Ovary (tissue), 10 donors: ENCODE measurements at regions of chr1 and their contacts with region 1.

Region 1: GRCh38 chr1:204929487-204930154 is 59.0 kb downstream of the NFASC start:
- DNase-seq: no peak
- H3K4me3 ChIP-seq: no peak overlapping the region
- H3K27ac ChIP-seq: no peak overlapping the region
- H3K4me1 ChIP-seq: peaks cover 9% of the 10 kb centered on the region
- H3K27me3 ChIP-seq: no peaks in the 10 kb centered on the region
- CTCF ChIP-seq: no peak
- EP300 ChIP-seq: no peak
- POLR2A ChIP-seq: no peak

Region 2: DNA sequence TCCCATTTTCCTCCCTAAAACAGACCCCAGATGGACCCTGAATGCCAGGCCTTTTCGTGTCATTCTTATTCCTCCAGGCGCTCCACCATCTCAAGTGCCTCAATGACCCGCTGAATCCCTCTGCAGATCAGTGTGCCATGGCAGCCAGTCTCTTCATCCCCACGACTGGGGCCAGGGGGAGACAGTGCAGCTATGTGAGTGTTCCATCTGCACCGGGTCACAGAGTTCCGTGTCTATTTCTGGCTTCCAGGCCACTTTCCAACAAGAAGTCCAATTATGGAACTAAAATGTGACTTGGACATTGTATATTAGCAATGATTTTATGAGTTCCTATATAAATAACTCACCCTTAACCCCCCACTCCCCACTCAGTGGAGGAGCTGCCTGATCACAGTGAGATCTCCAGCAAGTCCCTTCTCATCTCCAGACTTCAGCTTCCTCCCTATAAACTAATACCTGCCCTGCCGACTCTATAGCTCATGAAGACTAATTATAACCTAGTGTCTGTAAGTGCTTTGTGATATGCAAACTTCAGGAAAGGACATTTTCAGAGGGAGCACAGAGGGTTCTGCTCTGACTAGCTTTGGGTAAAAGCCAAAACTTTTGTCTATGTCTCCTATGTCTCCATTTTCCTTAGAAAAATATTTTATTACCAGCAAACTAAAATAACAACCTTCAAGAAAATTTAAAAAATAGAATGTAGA is 115.3 kb before region 1 on chr1:
- intact Hi-C with region 1: loop called in 1 of 4 experiments (anchors 5 kb)
- DNase-seq: no peak
- H3K4me3 ChIP-seq: no peak overlapping the region
- H3K27ac ChIP-seq: no peak overlapping the region
- H3K4me1 ChIP-seq: peaks cover 4% of the 10 kb centered on the region
- H3K27me3 ChIP-seq: no peaks in the 10 kb centered on the region
- CTCF ChIP-seq: no peak
- EP300 ChIP-seq: no peak
- POLR2A ChIP-seq: no peak

Region 3: DNA sequence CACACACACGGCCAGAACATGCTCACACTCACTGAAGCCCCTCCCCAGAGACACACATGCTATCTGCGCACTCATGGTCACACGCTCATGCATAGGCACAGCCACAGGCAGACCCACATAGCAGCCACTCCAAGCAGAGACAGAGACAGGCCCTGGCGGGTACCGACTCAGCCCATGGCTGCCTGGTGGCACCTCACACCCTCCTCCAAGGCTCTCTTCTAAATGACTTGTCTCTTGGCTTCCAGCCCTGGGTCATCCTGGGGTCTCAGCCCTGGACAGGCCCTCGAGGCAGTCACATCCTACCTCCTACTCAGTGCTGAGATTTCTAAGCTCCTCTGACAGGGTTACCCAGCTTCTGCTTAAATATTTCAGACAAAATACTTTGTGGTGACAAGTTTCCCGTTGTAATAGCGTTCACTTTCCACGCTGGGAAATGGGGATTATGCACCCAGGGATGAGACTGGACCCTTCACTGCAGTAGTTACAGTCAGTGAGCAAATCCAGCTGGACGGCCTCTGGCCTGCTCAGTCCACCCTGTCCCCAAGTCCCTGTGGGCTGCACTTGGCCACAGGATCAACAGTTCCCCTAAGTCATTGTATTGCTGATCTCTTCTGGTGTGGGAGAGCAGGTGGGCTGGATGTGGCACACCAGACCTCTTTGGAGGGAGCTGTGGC is 61.8 kb before region 1 on chr1:
- intact Hi-C with region 1: loop called in 1 of 4 experiments (anchors 2 kb)
- DNase-seq: no peak
- H3K4me3 ChIP-seq: no peak overlapping the region
- H3K27ac ChIP-seq: no peak overlapping the region
- H3K4me1 ChIP-seq: peaks cover 36% of the 10 kb centered on the region
- H3K27me3 ChIP-seq: no peaks in the 10 kb centered on the region
- CTCF ChIP-seq: no peak
- EP300 ChIP-seq: no peak
- POLR2A ChIP-seq: no peak

Region 4: GRCh38 chr1:205048382-205048781 is 118.8 kb after region 1 on chr1:
- intact Hi-C with region 1: no loop called
- DNase-seq: no peak
- H3K4me3 ChIP-seq: no peak overlapping the region
- H3K27ac ChIP-seq: no peak overlapping the region
- H3K4me1 ChIP-seq: no peaks in the 10 kb centered on the region
- H3K27me3 ChIP-seq: no peaks in the 10 kb centered on the region
- CTCF ChIP-seq: no peak
- EP300 ChIP-seq: no peak
- POLR2A ChIP-seq: no peak